ENCODE measurements at regions of chr12 and their contacts with region 1.

Region 1: DNA sequence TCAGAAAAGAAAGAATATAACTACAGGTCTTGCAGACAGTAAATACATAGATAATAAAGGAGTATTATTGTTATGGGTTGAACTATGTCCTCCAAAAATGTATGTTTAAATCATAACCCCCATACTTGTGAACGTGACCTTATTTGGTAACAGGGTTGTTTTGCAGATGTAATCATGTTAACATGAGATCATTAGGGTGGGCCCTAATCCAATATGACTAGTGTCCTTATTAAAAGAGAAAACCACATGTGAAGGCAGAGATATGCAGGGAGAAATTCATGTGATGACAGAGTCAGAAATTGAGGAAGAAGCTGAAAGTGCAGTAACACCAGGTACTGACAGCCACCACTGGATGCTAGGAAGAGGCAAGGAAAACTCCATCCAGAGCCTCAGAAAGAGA is 29.0 kb downstream of the MAGOHB start:
- DNase-seq: no peak
- ATAC-seq: no peak

Region 2: DNA sequence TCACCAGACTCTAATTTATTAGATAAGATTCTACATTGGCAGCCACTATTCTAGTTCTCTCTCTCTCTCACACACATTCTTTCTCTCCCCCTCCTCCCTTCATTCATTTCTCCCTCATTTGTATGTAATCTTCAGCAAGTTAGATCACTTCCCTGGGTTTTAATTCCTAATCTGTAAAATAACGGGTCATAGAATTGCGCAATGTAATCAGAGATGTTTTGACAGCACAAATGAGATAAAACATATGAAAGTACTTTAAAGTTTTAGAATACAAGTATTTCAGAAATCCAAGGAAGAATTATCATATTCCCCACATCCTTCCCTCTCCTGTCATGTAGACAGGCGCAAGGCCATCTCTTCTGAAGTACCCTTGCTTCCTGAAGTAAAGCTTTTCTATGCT is 67.8 kb after region 1 on chr12:
- intact Hi-C with region 1: loop called (anchors 10 kb)
- DNase-seq: no peak
- ATAC-seq: no peak